ENCODE measurements at regions of chr2 and their contacts with region 1.

Region 1: GRCh38 chr2:120520929-120521912 is 175.3 kb downstream of the INHBB start:
- DNase-seq: peak in 1 of 2 experiments; percentile 89
- H3K4me3 ChIP-seq: no peak overlapping the region
- H3K27ac ChIP-seq: no peak overlapping the region
- H3K4me1 ChIP-seq: peaks cover 0 to 7% (median 4%) of the 10 kb centered on the region in 4 experiments; a peak in 5 of 7 replicates
- H3K27me3 ChIP-seq: peaks cover 0 to 6% (median 4%) of the 10 kb centered on the region in 4 experiments; a peak in 4 of 7 replicates
- CTCF ChIP-seq: peak; percentile 85 to 98 (median 96)
- EP300 ChIP-seq: no peak
- POLR2A ChIP-seq: no peak
- RAD21 ChIP-seq: peak; percentile 67 to 69

Region 2: GRCh38 chr2:120442923-120443571 is 78.2 kb before region 1 on chr2:
- CTCF ChIA-PET with region 1: interaction called, 11 read pairs
- POLR2A ChIA-PET with region 1: interaction called, 3 read pairs
- DNase-seq: peak; percentile 70 to 94
- H3K4me3 ChIP-seq: peak overlapping the region; percentile 47 to 70 (median 56)
- H3K27ac ChIP-seq: no peak overlapping the region
- H3K4me1 ChIP-seq: peaks cover 0 to 7% (median 5%) of the 10 kb centered on the region in 4 experiments; a peak in 5 of 7 replicates
- H3K27me3 ChIP-seq: peaks cover 4 to 66% (median 56%) of the 10 kb centered on the region in 4 experiments
- CTCF ChIP-seq: no peak
- EP300 ChIP-seq: no peak
- POLR2A ChIP-seq: peak in 1 of 2 experiments; percentile 50; a peak in 2 of 3 replicates
- RAD21 ChIP-seq: peak in 1 of 2 experiments; percentile 0; a peak in 2 of 4 replicates

Region 3: GRCh38 chr2:120453635-120453998 is 67.6 kb before region 1 on chr2:
- CTCF ChIA-PET with region 1: no interaction called
- POLR2A ChIA-PET with region 1: no interaction called
- DNase-seq: no peak
- H3K4me3 ChIP-seq: no peak overlapping the region
- H3K27ac ChIP-seq: no peak overlapping the region
- H3K4me1 ChIP-seq: peaks cover 0 to 2% (median 0%) of the 10 kb centered on the region in 4 experiments; a peak in 2 of 7 replicates
- H3K27me3 ChIP-seq: peaks cover 0 to 19% (median 9%) of the 10 kb centered on the region in 4 experiments; a peak in 3 of 7 replicates
- CTCF ChIP-seq: no peak
- EP300 ChIP-seq: no peak
- POLR2A ChIP-seq: no peak
- RAD21 ChIP-seq: no peak

Region 4: GRCh38 chr2:120503793-120504571 is 17.2 kb before region 1 on chr2:
- CTCF ChIA-PET with region 1: interaction called, 91 read pairs
- POLR2A ChIA-PET with region 1: no interaction called
- DNase-seq: no peak
- H3K4me3 ChIP-seq: no peak overlapping the region
- H3K27ac ChIP-seq: peak overlapping the region; percentile 44; the same call in 1 of the 2 replicates
- H3K4me1 ChIP-seq: no peaks in the 10 kb centered on the region; a peak in 1 of 7 replicates
- H3K27me3 ChIP-seq: peaks cover 0 to 7% (median 2%) of the 10 kb centered on the region in 4 experiments; a peak in 3 of 7 replicates
- CTCF ChIP-seq: no peak
- EP300 ChIP-seq: no peak
- POLR2A ChIP-seq: no peak
- RAD21 ChIP-seq: no peak

Region 5: DNA sequence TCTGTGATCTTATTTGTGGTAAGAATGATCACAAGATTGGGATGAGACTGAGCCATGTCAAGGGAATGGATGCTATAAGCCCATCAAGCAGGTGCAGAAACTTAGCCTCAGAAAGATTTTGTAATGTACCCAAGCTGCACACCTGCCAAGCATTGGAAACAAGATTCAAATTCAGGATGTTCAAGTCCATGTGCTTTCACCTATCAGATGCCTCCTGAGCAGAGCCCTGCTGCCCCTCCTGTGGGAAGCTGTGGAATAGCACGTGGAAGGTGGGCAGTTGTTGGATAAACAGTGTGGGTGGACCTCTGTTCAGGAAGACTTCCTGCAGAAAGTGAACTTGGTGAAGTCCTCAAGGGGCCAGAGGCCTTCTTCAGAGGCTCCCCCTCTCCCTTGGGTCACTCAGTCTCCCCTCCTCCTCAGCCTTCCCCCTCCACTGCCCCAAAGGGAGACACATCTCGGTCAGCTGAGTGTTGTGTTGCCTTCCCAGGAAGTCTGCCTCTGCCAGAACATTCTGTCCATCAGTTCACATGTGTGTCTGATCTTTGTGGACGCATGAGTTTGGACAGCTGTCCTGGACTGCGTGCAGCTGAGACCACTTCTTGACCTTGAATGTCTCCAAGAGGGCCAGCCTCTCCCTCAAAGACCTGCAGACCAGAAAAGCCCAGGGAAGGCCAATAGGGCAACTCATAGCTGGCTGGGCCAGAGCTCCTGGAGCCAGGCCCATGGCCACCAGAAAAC is 10.8 kb after region 1 on chr2:
- CTCF ChIA-PET with region 1: interaction called, 15 read pairs
- POLR2A ChIA-PET with region 1: no interaction called
- DNase-seq: no peak
- H3K4me3 ChIP-seq: no peak overlapping the region
- H3K27ac ChIP-seq: no peak overlapping the region
- H3K4me1 ChIP-seq: no peaks in the 10 kb centered on the region
- H3K27me3 ChIP-seq: peaks cover 0 to 7% (median 3%) of the 10 kb centered on the region in 4 experiments; a peak in 3 of 7 replicates
- CTCF ChIP-seq: no peak
- EP300 ChIP-seq: no peak
- POLR2A ChIP-seq: no peak
- RAD21 ChIP-seq: no peak

Region 6: DNA sequence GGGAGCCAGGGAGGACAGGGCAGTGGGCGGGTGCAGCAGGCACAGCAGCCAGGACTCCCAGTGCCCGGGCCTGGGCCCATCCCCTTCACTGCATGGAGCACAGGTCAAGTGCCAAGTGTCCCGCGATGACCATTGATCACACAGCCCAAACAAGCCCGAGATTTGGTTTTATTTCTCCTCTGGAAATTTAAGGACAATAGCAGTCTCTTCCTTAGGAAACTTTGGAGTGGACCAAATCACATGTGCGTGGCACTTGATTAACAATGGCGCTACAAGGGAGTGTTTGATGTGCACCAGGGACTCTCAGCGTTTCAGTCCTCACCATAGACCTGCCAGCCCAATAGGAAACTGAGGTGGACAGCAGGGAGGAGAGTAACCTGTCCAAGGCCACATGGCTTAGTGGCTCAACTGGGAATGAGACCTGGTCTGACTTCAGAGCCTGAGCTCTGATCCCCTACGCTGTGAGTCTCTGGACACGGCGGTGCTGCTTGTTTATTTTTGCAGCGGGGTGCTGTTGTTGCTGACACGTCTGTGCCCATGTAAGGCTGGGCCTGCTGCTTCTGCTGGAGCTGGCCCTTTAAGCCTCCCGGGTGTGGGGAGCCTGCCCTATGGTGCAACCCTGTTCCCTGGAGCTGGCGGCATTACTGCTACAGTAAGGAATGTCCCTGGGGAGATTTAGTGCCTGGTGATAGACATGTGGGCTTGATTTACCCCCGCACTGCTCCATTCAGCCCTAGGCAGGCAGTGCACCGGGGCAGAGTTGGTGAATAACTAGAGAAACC is 18.9 kb after region 1 on chr2:
- CTCF ChIA-PET with region 1: interaction called, 19 read pairs
- POLR2A ChIA-PET with region 1: no interaction called
- DNase-seq: no peak
- H3K4me3 ChIP-seq: no peak overlapping the region
- H3K27ac ChIP-seq: no peak overlapping the region
- H3K4me1 ChIP-seq: peaks cover 0 to 5% (median under 1%) of the 10 kb centered on the region in 4 experiments; a peak in 2 of 7 replicates
- H3K27me3 ChIP-seq: peaks cover 0 to 3% (median 0%) of the 10 kb centered on the region in 4 experiments; a peak in 3 of 7 replicates
- CTCF ChIP-seq: no peak
- EP300 ChIP-seq: no peak
- POLR2A ChIP-seq: no peak
- RAD21 ChIP-seq: no peak

Region 7: GRCh38 chr2:120546048-120546864 is 25.0 kb after region 1 on chr2:
- CTCF ChIA-PET with region 1: interaction called, 19 read pairs
- POLR2A ChIA-PET with region 1: no interaction called
- DNase-seq: no peak
- H3K4me3 ChIP-seq: no peak overlapping the region
- H3K27ac ChIP-seq: no peak overlapping the region
- H3K4me1 ChIP-seq: peaks cover 0 to 3% (median 1%) of the 10 kb centered on the region in 4 experiments; a peak in 1 of 7 replicates
- H3K27me3 ChIP-seq: peaks cover 0 to 4% (median 0%) of the 10 kb centered on the region in 4 experiments; a peak in 3 of 7 replicates
- CTCF ChIP-seq: no peak
- EP300 ChIP-seq: no peak
- POLR2A ChIP-seq: no peak
- RAD21 ChIP-seq: no peak

Region 8: DNA sequence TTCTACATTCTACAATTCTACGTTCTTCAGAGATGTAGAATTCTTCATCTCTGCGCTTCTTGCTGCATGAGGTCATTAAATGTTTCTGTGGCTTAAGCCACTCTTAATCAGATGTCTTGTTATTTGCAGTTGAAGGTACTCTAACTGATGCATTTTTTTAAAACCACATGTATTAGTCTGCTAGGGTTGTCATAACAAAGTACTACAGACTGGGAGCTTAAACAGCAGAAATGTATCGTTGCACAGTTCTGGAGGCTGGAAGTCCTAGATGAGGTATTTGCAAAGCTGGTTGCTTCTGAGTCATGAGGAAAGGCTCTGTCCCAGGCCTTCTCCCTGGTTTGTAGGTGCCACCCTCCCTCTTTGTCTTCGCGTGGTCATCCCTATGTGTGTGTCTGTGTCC is 38.2 kb after region 1 on chr2:
- CTCF ChIA-PET with region 1: interaction called, 12 read pairs
- POLR2A ChIA-PET with region 1: no interaction called
- DNase-seq: no peak
- H3K4me3 ChIP-seq: no peak overlapping the region
- H3K27ac ChIP-seq: no peak overlapping the region
- H3K4me1 ChIP-seq: no peaks in the 10 kb centered on the region
- H3K27me3 ChIP-seq: peaks cover 0 to 7% (median 6%) of the 10 kb centered on the region in 4 experiments; a peak in 3 of 7 replicates
- CTCF ChIP-seq: no peak
- EP300 ChIP-seq: no peak
- POLR2A ChIP-seq: no peak
- RAD21 ChIP-seq: no peak

Measured in H1 (cell line).